ENCODE measurements at regions of chrX and their contacts with region 1.

Region 1: GRCh38 chrX:96684339-96685209 is at the start of gene DIAPH2:
- DNase-seq: peak; percentile 85
- H3K4me3 ChIP-seq: peak within 1 kb of the TSS; percentile 60 to 75 (median 74)
- H3K27ac ChIP-seq: peak within 1 kb of the TSS; percentile 82 to 84 (median 83)
- H3K4me1 ChIP-seq: peaks cover 0 to 6% (median 0%) of the 10 kb centered on the region in 4 donors
- H3K27me3 ChIP-seq: no peaks in the 10 kb centered on the region
- CTCF ChIP-seq: peak in 2 of 4 experiments; percentile 24 to 25
- EP300 ChIP-seq: no peak
- POLR2A ChIP-seq: peak in 1 of 2 donors; percentile 24
- total RNA-seq, gene DIAPH2: 21.7 to 31.3 (median 25.6) TPM

Region 2: GRCh38 chrX:96372313-96373046 is 312.1 kb before region 1 on chrX:
- intact Hi-C with region 1: loop called (anchors 10 kb)
- DNase-seq: no peak
- H3K4me3 ChIP-seq: no peak overlapping the region
- H3K27ac ChIP-seq: no peak overlapping the region
- H3K4me1 ChIP-seq: peaks cover 0 to 3% (median 0%) of the 10 kb centered on the region in 4 donors
- H3K27me3 ChIP-seq: no peaks in the 10 kb centered on the region
- CTCF ChIP-seq: peak in 3 of 4 experiments; percentile 24 to 50 (median 25)
- EP300 ChIP-seq: no peak
- POLR2A ChIP-seq: no peak

Region 3: DNA sequence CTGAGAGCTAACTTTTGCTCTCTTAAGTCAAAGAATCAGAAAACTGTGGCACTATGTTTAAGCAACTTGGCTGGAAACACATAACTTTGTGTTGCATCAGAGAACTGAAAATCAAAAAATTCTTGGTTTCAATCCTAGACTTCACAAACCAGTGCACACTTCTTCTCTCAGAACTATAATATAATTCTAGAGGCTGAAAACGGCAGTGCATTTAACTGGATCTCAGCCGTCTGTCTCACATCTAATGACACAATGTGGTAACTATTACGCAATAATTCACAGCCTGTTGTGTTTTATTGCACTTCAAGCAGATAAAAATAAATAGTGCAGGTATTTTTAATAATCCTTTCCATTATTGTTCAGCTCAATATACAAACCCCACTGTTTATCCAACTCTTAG is 260.6 kb before region 1 on chrX:
- intact Hi-C with region 1: no loop called
- DNase-seq: no peak
- H3K4me3 ChIP-seq: no peak overlapping the region
- H3K27ac ChIP-seq: no peak overlapping the region
- H3K4me1 ChIP-seq: no peaks in the 10 kb centered on the region
- H3K27me3 ChIP-seq: peaks cover 0 to 3% (median 0%) of the 10 kb centered on the region in 3 donors
- CTCF ChIP-seq: no peak
- EP300 ChIP-seq: no peak
- POLR2A ChIP-seq: no peak

Region 4: DNA sequence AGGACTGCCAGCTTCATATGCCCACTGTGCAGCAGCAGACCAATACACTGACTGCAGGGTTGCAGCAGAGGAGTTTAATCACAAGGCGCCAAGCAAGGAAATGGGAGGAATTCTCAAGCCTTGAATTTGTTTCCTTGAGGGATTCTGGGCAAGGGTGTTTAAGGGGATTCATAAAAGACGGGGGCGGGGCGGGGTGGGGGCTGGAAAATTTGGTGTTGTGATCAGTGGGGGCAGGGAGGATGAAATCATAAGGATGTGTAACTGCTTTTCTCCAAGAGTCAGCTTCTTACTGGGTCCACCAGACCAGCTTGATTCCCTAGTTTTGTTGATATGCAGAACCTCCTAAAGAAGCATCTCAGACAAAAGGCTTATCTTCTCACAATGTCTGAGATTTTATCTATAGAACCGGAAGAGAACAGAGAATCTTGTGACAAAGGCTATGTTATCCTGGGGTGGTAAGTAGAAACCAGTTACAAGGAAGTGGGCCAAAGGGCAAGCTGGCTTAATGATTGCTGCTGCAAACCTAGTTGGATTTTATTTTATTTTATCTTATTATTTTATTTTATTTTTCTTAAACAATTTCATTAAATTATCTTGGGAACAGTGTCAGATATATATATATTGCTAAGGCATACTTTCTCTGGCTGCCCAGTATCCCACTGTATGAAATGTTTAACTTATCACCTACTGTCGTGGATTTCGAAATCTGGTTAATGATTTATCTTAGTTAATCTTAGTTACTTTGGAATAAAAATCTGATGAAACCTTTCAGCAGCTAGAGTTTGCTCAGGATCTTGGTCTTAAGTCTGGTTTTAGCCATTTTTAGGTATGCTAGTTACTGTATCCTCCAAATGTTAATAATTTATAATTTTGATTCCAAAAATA is 475.6 kb after region 1 on chrX:
- intact Hi-C with region 1: no loop called
- DNase-seq: no peak
- H3K4me3 ChIP-seq: no peak overlapping the region
- H3K27ac ChIP-seq: no peak overlapping the region
- H3K4me1 ChIP-seq: no peaks in the 10 kb centered on the region
- H3K27me3 ChIP-seq: no peaks in the 10 kb centered on the region
- CTCF ChIP-seq: no peak
- EP300 ChIP-seq: no peak
- POLR2A ChIP-seq: no peak